ENCODE measurements at regions of chr2 and their contacts with region 1.

Region 1: DNA sequence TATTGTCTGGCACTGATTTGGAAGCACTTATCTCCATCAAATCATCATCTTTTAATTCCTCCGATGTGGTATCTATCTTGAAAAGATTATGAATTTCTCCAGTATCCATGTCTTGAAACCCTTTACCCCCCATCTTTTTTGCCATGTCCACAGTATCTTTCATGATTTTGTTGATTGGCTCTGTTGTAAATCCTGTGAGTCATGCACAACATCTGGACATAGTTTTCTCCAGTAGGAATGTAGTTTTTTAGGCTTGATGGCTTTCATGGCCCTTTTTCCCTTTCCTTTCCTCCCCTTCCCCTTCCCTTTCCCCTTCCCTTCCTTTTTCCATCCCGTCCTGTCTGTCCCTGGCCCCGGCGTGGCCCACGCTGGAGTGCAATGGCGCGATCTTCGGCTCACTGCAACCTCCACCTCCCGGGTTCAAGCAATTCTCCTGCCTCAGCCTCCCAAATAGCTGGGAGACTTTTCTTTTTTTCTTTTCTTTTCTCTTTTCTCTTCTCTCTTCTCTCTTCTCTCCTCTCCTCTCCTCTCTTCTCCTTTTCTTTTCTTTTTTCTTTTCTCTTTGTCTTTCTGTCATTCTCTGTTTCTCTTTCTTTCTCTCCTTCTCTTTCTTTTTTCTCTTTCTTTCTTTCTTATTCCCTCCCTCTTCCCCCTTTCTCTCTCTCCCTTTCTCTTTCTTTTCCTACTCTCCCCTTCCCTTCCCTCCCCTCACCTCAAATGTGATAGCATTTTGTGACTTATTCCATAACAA is 18.4 kb upstream of the ZNF638 start:
- DNase-seq: no peak
- H3K4me3 ChIP-seq: no peak overlapping the region
- H3K27ac ChIP-seq: no peak overlapping the region
- H3K4me1 ChIP-seq: no peaks in the 10 kb centered on the region
- H3K27me3 ChIP-seq: no peaks in the 10 kb centered on the region
- CTCF ChIP-seq: no peak

Region 2: GRCh38 chr2:69698383-69698782 is 1614.8 kb before region 1 on chr2:
- CTCF ChIA-PET with region 1: interaction called, 11 read pairs
- POLR2A ChIA-PET with region 1: no interaction called
- intact Hi-C with region 1: no loop called
- DNase-seq: no peak
- H3K4me3 ChIP-seq: no peak overlapping the region
- H3K27ac ChIP-seq: no peak overlapping the region
- H3K4me1 ChIP-seq: no peaks in the 10 kb centered on the region
- H3K27me3 ChIP-seq: no peaks in the 10 kb centered on the region
- CTCF ChIP-seq: no peak

Measured in A673 (cell line).